PC-3 (cell line): ENCODE measurements at regions of chr2 and their contacts with region 1.

Region 1: DNA sequence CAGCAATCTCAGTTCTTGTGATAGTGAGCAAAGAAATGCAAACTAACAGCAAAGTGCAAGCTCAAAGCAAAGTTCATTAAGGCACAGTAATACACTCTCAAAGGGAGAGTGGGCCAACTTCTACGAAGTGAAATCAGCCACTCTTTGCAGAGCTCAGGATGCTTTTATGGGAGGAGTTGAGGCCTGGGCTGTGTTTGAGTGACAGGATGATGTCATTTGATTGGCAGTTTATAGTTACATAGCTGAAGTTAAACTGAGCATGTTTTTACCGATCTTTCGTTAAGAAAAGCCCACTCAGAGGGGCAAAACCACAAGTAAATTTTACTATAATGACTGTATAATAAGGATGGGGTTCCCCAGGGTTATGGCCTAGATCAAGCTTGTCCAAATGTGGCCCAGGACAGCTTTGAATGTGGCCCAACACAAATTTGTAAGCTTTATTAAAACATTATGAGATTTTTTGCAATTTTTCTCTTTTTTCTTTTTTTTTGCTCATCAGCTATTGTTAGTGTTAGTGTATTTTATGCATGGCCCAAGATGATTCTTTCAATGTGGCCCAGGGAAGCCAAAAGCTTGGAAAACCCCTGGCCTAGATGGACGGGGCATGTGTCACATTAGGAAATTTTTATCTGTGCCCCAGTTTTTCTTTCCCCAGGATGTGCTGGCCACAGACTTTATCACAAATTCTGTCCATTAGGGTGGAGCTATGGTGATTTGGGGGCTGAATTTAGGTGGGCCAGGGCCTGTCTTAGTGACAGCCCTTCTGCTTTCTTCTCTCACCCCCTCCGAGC is 8.3 kb upstream of the DNAH7 start:
- DNase-seq: no peak
- ATAC-seq: no peak
- H3K4me3 ChIP-seq: no peak overlapping the region
- H3K27ac ChIP-seq: no peak overlapping the region
- H3K4me1 ChIP-seq: peaks cover 22% of the 10 kb centered on the region
- H3K27me3 ChIP-seq: no peaks in the 10 kb centered on the region
- CTCF ChIP-seq: no peak

Region 2: DNA sequence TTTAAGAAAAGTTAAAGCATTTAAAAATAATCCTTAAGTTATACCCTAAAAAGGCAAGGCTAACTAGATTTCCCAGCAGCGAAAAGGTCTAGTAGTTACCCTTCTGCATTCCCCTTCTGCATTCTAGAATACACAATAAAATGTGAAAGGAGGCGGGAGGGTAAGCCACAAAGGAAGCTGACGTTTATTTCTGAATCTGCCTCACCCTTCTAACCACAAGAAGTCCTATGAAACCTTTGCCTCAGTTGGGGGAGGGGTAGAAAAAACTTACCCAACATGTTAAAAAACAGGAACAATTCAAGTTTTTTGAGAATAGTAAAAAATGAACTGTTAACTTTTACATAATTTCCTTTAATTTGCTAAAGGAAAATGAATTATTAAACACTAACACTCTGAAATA is 83.1 kb after region 1 on chr2:
- CTCF ChIA-PET with region 1: no interaction called
- POLR2A ChIA-PET with region 1: interaction called, 4 read pairs
- intact Hi-C with region 1: loop called (anchors 1 kb)
- DNase-seq: peak; percentile 95
- ATAC-seq: peak; percentile 98
- H3K4me3 ChIP-seq: peak overlapping the region; percentile 41
- H3K27ac ChIP-seq: peak overlapping the region; percentile 52
- H3K4me1 ChIP-seq: peaks cover 22% of the 10 kb centered on the region
- H3K27me3 ChIP-seq: no peaks in the 10 kb centered on the region
- CTCF ChIP-seq: no peak

Region 3: DNA sequence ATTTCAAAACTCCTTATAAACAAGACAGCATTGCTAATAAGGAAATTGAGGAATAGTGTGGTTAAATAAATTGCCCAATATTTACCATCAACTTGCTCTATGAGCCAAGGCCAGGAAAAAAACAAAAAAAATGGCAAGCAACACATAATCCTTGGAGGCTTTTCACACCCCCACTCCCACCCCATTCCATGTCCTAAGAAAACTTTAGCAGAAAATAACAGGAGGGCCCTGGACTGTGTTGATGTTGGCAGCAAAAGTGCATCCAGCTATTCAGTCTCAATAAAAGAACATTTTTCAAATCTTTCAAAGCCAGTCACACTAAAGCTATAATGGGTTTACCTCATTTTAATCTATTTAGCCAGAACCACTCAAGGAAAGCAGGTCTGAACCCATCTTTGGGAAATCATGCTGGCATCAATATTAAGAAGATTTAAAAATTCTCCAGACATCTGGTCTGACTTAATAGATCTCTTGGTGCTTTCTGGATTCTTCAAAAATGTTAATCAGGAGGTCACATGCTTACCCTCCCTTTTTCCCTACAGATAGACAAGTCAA is 129.0 kb after region 1 on chr2:
- CTCF ChIA-PET with region 1: no interaction called
- POLR2A ChIA-PET with region 1: no interaction called
- intact Hi-C with region 1: no loop called
- DNase-seq: no peak
- ATAC-seq: no peak
- H3K4me3 ChIP-seq: no peak overlapping the region
- H3K27ac ChIP-seq: no peak overlapping the region
- H3K4me1 ChIP-seq: no peaks in the 10 kb centered on the region
- H3K27me3 ChIP-seq: no peaks in the 10 kb centered on the region
- CTCF ChIP-seq: no peak

Region 4: DNA sequence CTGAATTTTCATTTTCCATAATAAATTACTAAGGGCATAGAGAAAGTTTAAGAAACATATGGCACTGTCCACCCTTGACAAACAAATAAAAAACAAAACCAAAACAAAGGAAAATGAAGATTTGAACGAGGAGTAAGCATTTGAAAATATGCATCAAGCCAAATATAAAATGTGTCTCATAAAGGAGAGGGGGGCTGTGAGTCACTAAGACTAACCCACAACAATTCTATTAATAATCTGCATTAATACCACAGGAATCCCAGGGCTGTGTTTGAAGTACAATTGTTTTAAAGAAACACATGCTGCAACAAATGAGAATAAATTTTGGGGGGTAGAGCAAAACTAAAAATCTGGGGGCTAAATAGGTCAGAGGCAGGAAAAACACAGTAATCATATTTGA is 148.2 kb after region 1 on chr2:
- CTCF ChIA-PET with region 1: no interaction called
- POLR2A ChIA-PET with region 1: no interaction called
- intact Hi-C with region 1: loop called (anchors 2 kb)
- DNase-seq: peak; percentile 69
- ATAC-seq: peak; percentile 94
- H3K4me3 ChIP-seq: no peak overlapping the region
- H3K27ac ChIP-seq: no peak overlapping the region
- H3K4me1 ChIP-seq: peaks cover 12% of the 10 kb centered on the region
- H3K27me3 ChIP-seq: no peaks in the 10 kb centered on the region
- CTCF ChIP-seq: no peak

Region 5: DNA sequence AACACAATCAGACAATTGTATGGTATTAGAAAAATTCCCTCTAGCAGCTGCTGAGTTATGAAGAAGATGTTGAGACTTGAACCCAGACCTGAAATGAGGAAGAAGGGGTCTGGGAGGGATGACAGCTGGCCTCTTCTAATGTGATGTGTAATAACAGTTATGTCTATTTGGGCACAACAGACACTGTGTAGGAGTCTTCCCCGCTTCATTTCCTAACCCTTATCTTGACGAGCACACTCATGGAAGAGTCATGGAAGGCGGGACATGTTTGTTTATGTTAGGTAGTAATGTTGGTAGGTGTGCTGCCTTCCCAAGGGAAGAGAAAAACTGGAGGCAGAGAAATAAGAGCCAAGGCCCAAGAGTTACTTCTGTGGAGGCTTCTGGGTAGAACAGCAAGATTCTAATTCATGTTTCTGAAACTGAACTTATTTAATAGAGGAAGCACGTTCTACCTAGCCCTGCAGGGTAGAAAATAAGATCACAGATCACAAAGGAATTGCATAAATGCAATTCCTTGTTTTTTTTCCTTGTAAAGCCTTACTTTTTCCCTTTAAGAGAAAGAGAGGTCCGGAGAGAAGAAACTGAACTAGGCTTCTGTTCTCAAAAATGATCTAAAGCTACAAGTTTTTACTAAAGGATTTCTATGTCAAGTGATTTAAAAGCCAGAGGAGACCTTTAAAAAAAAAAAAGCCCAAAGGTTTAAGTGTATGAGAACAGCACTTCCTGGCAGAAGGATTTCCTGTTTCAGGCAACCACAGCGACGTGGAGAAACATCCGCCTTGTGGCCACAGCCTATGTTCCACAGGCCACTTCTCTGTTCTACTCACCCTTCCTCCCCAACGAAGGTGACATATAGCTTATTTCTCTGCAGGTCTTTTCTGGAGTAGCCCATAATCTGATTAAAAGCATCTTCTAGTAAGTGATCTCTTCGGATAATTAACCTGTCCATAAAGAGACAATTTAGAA is 162.9 kb after region 1 on chr2:
- CTCF ChIA-PET with region 1: no interaction called
- POLR2A ChIA-PET with region 1: no interaction called
- intact Hi-C with region 1: loop called (anchors 1 kb)
- DNase-seq: peak; percentile 97
- ATAC-seq: peak; percentile 97
- H3K4me3 ChIP-seq: peak overlapping the region; percentile 25; the same call in 1 of the 2 replicates
- H3K27ac ChIP-seq: peak overlapping the region; percentile 94
- H3K4me1 ChIP-seq: peaks cover 25% of the 10 kb centered on the region
- H3K27me3 ChIP-seq: no peaks in the 10 kb centered on the region
- CTCF ChIP-seq: 0 out of 2 replicates have a peak, but pooled peaks have one; percentile 33

Region 6: DNA sequence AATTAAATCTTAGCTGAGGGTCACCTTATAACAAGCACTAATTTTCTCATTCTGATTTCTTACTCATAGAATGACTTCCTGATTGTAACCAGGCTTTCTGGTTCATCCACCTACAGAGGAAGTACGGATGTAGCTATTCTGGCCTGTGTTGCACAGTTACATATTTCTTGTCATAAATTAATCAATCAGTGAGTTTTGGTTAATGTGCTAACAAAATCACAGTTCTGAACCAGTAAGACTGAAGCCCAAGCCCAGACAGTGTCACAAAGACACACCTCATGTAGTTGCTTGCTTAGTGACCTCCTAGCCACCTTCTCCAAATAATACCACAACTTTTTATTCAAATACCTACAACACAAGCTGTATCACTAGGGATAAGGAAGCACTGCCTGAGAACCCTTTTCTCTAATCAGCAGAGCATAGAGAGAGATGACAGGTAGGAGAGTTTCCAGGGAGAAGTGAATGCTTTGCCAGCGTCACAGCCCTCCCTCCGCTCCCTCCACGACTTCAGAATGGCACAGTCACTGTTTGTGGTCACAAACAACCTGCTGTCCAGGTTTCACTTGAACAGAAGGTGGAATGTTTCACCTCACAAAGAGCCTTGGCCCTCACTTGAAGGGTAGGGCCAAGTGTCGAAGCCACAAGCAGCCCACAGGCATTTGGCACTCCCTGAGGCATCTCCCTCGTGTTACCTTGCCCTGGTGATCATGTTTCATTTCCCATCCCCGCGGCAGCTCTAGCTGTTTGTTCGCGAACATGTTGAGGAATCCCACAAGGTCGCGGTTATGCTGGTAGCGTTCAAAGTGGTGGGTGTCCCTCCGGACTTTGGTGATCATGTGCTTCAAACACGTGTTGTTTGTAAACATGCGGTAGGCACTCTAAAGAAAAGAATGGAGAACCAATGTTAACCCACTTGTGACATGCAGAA is 215.2 kb after region 1 on chr2:
- CTCF ChIA-PET with region 1: interaction called, 11 read pairs
- POLR2A ChIA-PET with region 1: no interaction called
- intact Hi-C with region 1: loop called (anchors 1 kb)
- DNase-seq: peak; percentile 99
- ATAC-seq: peak; percentile 66
- H3K4me3 ChIP-seq: peak overlapping the region; percentile 49
- H3K27ac ChIP-seq: peak overlapping the region; percentile 98
- H3K4me1 ChIP-seq: peaks cover 54% of the 10 kb centered on the region
- H3K27me3 ChIP-seq: no peaks in the 10 kb centered on the region
- CTCF ChIP-seq: no peak

Region 7: DNA sequence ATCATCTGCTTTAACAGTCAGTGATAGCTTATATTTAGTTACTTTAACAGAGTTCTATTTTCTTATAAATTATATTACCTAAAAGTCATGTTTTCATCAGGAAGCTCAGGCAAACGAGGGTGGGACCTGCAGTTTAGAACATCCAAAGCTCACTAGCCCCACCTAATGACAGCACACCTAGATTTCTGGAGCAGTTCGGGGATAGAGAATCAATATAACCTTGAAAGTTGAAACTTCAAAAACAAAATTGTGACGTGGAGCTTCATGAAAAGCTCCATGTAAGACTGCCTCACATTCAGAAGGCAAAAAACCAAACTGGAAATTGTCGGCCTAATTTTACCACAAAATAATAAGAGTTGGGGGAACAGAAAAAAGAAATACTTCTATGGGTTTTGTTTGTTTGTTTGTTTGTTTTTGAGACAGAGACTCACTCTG is 376.7 kb after region 1 on chr2:
- CTCF ChIA-PET with region 1: interaction called, 7 read pairs
- POLR2A ChIA-PET with region 1: no interaction called
- intact Hi-C with region 1: loop called (anchors 1 kb)
- DNase-seq: peak; percentile 72
- ATAC-seq: peak; percentile 89
- H3K4me3 ChIP-seq: no peak overlapping the region
- H3K27ac ChIP-seq: no peak overlapping the region
- H3K4me1 ChIP-seq: no peaks in the 10 kb centered on the region
- H3K27me3 ChIP-seq: peaks cover 11% of the 10 kb centered on the region
- CTCF ChIP-seq: peak; percentile 80